HAP-1 (cell line): ENCODE measurements at regions of chr19 and their contacts with region 1.

Region 1: GRCh38 chr19:2648528-2648937 is 54.0 kb downstream of the GNG7 start:
- DNase-seq: peak; percentile 57 to 84
- H3K4me3 ChIP-seq: no peak overlapping the region
- H3K4me1 ChIP-seq: no peaks in the 10 kb centered on the region
- H3K27me3 ChIP-seq: no peaks in the 10 kb centered on the region

Region 2: DNA sequence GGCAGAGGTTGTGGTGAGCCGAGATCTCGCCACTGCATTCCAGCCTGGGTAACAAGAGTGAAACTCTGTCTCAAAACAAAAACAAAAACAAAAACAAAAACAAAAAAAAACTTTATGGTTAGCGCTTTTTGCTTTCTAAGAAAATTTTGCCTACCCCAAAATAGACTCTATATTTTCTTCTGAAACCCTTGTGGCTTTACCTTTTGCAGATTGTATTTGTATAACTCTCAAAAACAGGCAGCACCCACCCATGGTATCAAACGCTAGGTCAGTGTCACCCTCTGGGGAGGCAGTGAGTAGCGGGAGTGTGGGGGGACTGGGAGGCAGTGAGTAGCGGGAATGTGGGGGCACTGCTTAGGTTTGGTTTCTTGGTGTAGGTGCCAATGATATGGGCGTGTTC is 98.8 kb after region 1 on chr19:
- in situ Hi-C with region 1: loop called (anchors 5 kb)
- DNase-seq: no peak
- H3K4me3 ChIP-seq: no peak overlapping the region
- H3K4me1 ChIP-seq: no peaks in the 10 kb centered on the region
- H3K27me3 ChIP-seq: no peaks in the 10 kb centered on the region